AG04450 (cell line): ENCODE measurements at regions of chr13 and their contacts with region 1.

Region 1: GRCh38 chr13:26698392-26699196 is 62.0 kb downstream of the GPR12 start:
- DNase-seq: peak; percentile 73
- H3K4me3 ChIP-seq: peak overlapping the region; percentile 20; the same call in 1 of the 2 replicates
- H3K27ac ChIP-seq: no peak overlapping the region
- H3K27me3 ChIP-seq: peaks cover 3% of the 10 kb centered on the region
- CTCF ChIP-seq: peak; percentile 96

Region 2: DNA sequence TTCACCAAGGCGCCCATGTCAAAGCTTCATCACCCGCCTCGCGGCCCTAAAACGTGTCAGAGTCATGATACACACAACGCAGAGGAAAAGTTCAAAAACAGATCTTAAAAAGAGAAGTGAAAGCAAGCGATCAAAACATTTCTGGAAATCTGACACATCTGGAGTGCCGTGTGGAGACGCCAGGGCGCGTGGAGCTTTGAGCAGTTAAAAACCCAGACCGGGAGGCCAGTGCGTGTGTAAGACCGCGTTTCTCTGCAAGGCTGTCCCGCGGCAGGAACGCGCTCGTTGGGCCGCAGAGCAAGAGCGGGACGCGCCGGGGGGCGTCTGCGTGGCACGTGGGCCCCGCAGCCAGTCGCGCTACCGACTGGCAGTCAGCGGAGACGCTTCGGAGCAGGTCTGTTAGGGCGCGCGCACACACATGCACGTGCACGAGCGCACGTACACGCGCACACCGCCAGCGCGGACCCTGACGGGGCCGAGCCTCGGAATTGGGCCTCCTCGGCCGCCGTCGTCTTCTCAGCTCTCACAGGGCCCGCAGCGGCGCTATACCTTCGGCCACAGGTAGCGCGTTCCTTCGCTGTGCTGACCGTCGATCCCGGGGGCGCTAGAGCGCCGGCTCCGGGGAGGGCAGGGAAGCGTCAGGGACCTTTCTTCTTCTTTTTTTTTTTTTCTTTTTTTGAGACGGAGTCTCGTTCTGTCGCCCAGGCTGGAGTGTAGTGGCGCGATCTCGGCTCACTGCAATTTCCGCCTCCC is 512.3 kb before region 1 on chr13:
- CTCF ChIA-PET with region 1: interaction called, 174 read pairs
- POLR2A ChIA-PET with region 1: interaction called, 4 read pairs
- DNase-seq: peak; percentile 77
- H3K4me3 ChIP-seq: peak overlapping the region; percentile 73
- H3K27ac ChIP-seq: peak overlapping the region; percentile 57
- H3K27me3 ChIP-seq: no peaks in the 10 kb centered on the region
- CTCF ChIP-seq: peak; percentile 38

Region 3: GRCh38 chr13:26476111-26476781 is 222.3 kb before region 1 on chr13:
- CTCF ChIA-PET with region 1: interaction called, 83 read pairs
- POLR2A ChIA-PET with region 1: no interaction called
- DNase-seq: no peak
- H3K4me3 ChIP-seq: peak overlapping the region; percentile 43
- H3K27ac ChIP-seq: peak overlapping the region; percentile 39
- H3K27me3 ChIP-seq: no peaks in the 10 kb centered on the region
- CTCF ChIP-seq: no peak

Region 4: GRCh38 chr13:26502826-26503225 is 195.8 kb before region 1 on chr13:
- CTCF ChIA-PET with region 1: interaction called, 46 read pairs
- POLR2A ChIA-PET with region 1: no interaction called
- DNase-seq: peak; percentile 24
- H3K4me3 ChIP-seq: no peak overlapping the region
- H3K27ac ChIP-seq: no peak overlapping the region
- H3K27me3 ChIP-seq: no peaks in the 10 kb centered on the region
- CTCF ChIP-seq: peak; percentile 44

Region 5: GRCh38 chr13:26656919-26657318 is 41.7 kb before region 1 on chr13:
- CTCF ChIA-PET with region 1: interaction called, 31 read pairs
- POLR2A ChIA-PET with region 1: no interaction called
- DNase-seq: peak; percentile 68
- H3K4me3 ChIP-seq: no peak overlapping the region
- H3K27ac ChIP-seq: no peak overlapping the region
- H3K27me3 ChIP-seq: no peaks in the 10 kb centered on the region
- CTCF ChIP-seq: peak; percentile 66

Region 6: GRCh38 chr13:26688286-26688685 is 10.3 kb before region 1 on chr13:
- CTCF ChIA-PET with region 1: interaction called, 56 read pairs
- POLR2A ChIA-PET with region 1: no interaction called
- DNase-seq: no peak
- H3K4me3 ChIP-seq: no peak overlapping the region
- H3K27ac ChIP-seq: no peak overlapping the region
- H3K27me3 ChIP-seq: no peaks in the 10 kb centered on the region
- CTCF ChIP-seq: no peak

Region 7: GRCh38 chr13:26881178-26881577 is 182.6 kb after region 1 on chr13:
- CTCF ChIA-PET with region 1: no interaction called
- POLR2A ChIA-PET with region 1: no interaction called
- DNase-seq: peak; percentile 3
- H3K4me3 ChIP-seq: no peak overlapping the region; the same call in 1 of the 2 replicates
- H3K27ac ChIP-seq: no peak overlapping the region
- H3K27me3 ChIP-seq: no peaks in the 10 kb centered on the region
- CTCF ChIP-seq: no peak